Activated CD4-positive, alpha-beta memory T cell treated with anti-CD3 and anti-CD28 coated beads for 36 hours (primary cell): ENCODE measurements at regions of chr11 and their contacts with region 1.

Region 1: DNA sequence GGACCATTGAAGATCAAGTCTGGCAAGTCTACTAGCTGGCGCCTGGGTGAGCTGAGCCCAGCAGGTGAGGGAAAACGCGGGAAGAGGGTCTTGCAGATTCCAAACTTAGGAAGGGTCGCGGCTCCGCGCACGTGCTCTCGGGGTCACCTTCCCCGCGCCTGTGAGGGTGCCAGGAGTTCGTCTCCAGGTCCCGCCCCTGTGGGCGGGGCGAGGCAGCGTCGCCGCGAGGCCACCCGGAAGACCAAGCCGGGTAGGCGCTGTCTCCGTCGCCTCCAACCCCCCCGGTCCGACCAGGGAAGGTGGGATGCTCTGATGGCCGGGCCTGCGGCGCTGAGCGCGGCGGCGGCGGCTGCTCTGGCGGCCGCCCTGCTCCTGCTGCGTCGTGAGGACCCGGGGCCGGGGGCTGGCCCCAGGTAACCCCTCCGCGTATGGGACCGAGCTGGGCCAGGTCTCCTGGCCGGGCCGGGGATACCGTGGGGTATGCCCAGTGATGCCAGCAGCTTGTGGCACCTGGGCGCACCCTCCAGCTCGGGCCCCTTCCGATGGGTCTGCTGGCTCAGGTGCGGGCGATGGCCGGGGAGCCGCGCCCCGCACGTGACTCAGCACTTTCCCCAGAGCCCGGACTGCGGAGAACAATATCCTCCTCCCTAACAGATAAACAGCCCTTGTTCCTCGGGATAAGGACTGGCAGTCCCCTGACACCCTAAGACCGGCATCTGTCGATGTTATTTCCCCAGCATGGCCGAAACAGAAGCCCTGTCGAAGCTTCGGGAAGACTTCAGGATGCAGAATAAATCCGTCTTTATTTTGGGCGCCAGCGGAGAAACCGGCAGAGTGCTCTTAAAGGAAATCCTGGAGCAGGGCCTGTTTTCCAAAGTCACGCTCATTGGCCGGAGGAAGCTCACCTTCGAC is at the start of gene HTATIP2:
- DNase-seq: peak; percentile 82
- H3K4me3 Mint-ChIP-seq: peak within 1 kb of the TSS; percentile 80
- H3K27ac Mint-ChIP-seq: peak within 1 kb of the TSS; percentile 84
- H3K4me1 Mint-ChIP-seq: peaks cover 59% of the 10 kb centered on the region
- H3K27me3 Mint-ChIP-seq: no peaks in the 10 kb centered on the region
- total RNA-seq, gene HTATIP2: 82.1 to 83.4 TPM

Region 2: DNA sequence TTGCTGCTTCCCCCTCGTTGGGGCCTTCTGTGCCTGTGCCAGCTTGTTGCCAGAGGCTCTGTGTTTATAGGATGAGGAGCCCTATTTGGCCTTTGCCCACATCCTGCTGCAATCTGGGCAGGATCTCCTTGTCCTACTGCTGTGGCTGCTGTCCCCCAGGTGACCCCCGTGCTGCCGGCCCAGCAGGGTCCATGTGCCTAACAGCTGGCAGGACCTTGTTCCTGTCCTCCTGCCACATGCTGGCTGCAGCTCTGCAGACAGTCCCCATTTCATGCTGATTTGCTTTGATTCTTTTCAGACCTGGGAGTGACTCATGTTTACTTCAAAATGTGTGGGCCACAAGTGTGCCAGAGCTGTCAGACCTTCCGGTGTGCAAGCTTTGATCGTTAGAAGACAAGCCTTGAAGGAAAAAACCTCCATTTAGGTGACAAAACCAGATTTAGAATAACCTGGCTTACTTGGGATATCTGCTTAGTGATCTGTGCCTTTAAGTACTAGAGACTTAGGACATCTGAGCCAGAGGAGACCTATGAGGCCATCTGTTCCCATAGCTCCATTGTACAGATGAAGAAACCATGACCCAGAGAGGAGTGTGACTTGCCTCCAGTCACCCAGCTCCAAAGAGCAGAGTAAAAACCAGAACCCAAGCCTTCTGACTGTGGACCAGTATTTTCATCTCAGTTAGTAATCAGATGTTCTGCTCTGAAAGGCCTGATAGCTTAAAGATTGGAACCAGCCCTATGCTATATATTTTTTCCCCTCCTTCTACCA is 640.0 kb before region 1 on chr11:
- CTCF ChIA-PET with region 1: no interaction called
- POLR2A ChIA-PET with region 1: no interaction called
- intact Hi-C with region 1: loop called (anchors 5 kb)
- DNase-seq: peak; percentile 71
- H3K4me3 Mint-ChIP-seq: peak overlapping the region; percentile 18
- H3K27ac Mint-ChIP-seq: peak overlapping the region; percentile 86
- H3K4me1 Mint-ChIP-seq: peaks cover 29% of the 10 kb centered on the region
- H3K27me3 Mint-ChIP-seq: no peaks in the 10 kb centered on the region

Region 3: GRCh38 chr11:19970944-19971343 is 392.8 kb before region 1 on chr11:
- CTCF ChIA-PET with region 1: no interaction called
- POLR2A ChIA-PET with region 1: no interaction called
- intact Hi-C with region 1: loop called (anchors 5 kb)
- DNase-seq: peak; percentile 68
- H3K4me3 Mint-ChIP-seq: no peak overlapping the region
- H3K27ac Mint-ChIP-seq: no peak overlapping the region
- H3K4me1 Mint-ChIP-seq: peaks cover 15% of the 10 kb centered on the region
- H3K27me3 Mint-ChIP-seq: peaks cover 17% of the 10 kb centered on the region

Region 4: DNA sequence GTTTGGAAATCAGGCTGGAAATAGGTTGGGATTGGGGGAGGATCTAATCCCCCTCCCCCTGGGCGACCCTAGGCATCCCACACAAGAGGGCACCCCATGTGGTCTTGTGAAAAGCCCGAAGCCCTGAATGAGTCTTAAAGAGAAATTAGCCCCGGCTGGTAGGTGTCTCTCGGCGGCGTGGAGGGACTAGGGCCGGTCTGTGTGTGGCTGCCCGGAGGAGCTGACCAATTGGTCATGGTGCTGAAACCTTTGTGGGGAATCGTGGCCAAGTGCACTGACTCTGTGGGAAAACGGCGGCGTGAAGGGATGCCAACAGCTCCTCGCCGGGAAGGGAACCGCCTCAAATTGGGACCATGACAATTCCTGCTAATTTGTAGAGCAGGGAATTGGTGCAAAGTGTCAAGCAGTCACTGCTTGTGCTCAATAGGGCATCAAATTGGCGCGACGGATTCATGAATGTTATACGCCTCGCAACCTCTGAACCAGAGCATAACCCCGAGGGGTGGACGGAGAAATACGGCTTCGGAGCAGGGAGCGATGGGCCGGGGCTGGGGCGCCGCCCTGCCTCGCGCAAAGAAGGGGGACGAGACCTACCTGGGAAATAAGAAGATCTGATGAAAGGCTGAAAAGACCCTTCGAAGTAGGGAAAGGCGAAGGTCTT is 205.0 kb before region 1 on chr11:
- CTCF ChIA-PET with region 1: no interaction called
- POLR2A ChIA-PET with region 1: interaction called, 3 read pairs
- intact Hi-C with region 1: loop called (anchors 10 kb)
- DNase-seq: peak; percentile 42
- H3K4me3 Mint-ChIP-seq: peak overlapping the region; percentile 21
- H3K27ac Mint-ChIP-seq: no peak overlapping the region
- H3K4me1 Mint-ChIP-seq: peaks cover 32% of the 10 kb centered on the region
- H3K27me3 Mint-ChIP-seq: peaks cover 70% of the 10 kb centered on the region

Region 5: GRCh38 chr11:20387241-20388095 is 23.7 kb after region 1 on chr11 and contains the start of gene PRMT3:
- CTCF ChIA-PET with region 1: interaction called, 11 read pairs
- POLR2A ChIA-PET with region 1: interaction called, 4 read pairs
- intact Hi-C with region 1: loop called (anchors 1 kb)
- DNase-seq: peak; percentile 98
- H3K4me3 Mint-ChIP-seq: peak within 1 kb of the TSS; percentile 96
- H3K27ac Mint-ChIP-seq: peak within 1 kb of the TSS; percentile 99
- H3K4me1 Mint-ChIP-seq: peaks cover 20% of the 10 kb centered on the region
- H3K27me3 Mint-ChIP-seq: no peaks in the 10 kb centered on the region
- total RNA-seq, gene PRMT3: 31.2 to 33.2 TPM

Region 6: DNA sequence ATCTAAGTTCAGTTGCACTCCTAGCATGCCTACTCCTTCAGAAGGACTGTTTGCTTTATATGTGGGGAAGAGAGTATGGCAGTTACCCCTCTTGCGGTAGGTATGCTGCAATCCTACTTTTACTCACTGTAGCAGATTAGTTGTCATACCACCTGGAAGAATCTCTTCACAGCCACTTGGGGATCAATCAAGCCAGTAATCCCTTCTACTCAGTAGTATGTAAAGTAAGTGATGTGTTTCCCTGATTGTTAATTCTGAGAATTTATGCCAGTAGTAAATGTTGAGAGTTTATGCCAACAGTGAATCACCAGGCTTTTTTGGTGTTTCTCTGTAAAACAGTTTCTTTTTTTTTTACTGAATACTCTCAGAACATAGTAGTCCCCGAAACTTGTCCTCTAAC is 58.2 kb after region 1 on chr11:
- CTCF ChIA-PET with region 1: no interaction called
- POLR2A ChIA-PET with region 1: no interaction called
- intact Hi-C with region 1: no loop called
- DNase-seq: no peak
- H3K4me3 Mint-ChIP-seq: no peak overlapping the region
- H3K27ac Mint-ChIP-seq: peak overlapping the region; percentile 68
- H3K4me1 Mint-ChIP-seq: peaks cover 20% of the 10 kb centered on the region
- H3K27me3 Mint-ChIP-seq: no peaks in the 10 kb centered on the region